MCF 10A (cell line): ENCODE measurements at regions of chr20 and their contacts with region 1.

Region 1: GRCh38 chr20:9392892-9393857 is 121.2 kb upstream of the LAMP5 start:
- DNase-seq: peak; percentile 76
- H3K4me3 Mint-ChIP-seq: no peak overlapping the region
- H3K27ac Mint-ChIP-seq: no peak overlapping the region
- H3K4me1 Mint-ChIP-seq: no peaks in the 10 kb centered on the region
- H3K27me3 Mint-ChIP-seq: no peaks in the 10 kb centered on the region
- CTCF ChIP-seq: peak; percentile 71

Region 2: GRCh38 chr20:8756410-8756809 is 636.8 kb before region 1 on chr20:
- CTCF ChIA-PET with region 1: interaction called, 52 read pairs
- POLR2A ChIA-PET with region 1: interaction called, 3 read pairs
- intact Hi-C with region 1: loop called (anchors 1 kb)
- DNase-seq: peak; percentile 76
- H3K4me3 Mint-ChIP-seq: no peak overlapping the region
- H3K27ac Mint-ChIP-seq: no peak overlapping the region
- H3K4me1 Mint-ChIP-seq: peaks cover 17% of the 10 kb centered on the region
- H3K27me3 Mint-ChIP-seq: no peaks in the 10 kb centered on the region
- CTCF ChIP-seq: no peak

Region 3: DNA sequence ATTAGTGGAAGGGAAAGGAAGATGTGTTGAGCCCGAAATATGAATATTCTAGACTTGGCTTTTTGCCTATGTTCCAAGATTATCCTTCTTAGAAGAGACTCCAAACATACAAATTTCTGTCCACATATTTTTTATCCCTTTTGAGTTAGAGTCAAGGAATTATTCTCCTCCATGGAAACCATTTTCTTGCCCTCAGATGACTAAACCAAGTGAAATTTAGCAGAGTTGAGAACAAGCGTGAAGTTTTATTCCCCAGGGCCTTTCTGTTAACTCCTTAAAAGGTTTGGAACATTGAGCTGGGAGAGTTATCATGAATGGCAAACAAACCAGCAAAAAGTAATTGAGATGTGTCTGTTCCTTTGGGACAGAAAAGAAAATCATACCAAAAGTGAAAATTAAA is 610.4 kb before region 1 on chr20:
- CTCF ChIA-PET with region 1: interaction called, 77 read pairs
- POLR2A ChIA-PET with region 1: no interaction called
- intact Hi-C with region 1: no loop called
- DNase-seq: no peak
- H3K4me3 Mint-ChIP-seq: no peak overlapping the region
- H3K27ac Mint-ChIP-seq: peak overlapping the region; percentile 51
- H3K4me1 Mint-ChIP-seq: no peaks in the 10 kb centered on the region
- H3K27me3 Mint-ChIP-seq: no peaks in the 10 kb centered on the region
- CTCF ChIP-seq: no peak

Region 4: DNA sequence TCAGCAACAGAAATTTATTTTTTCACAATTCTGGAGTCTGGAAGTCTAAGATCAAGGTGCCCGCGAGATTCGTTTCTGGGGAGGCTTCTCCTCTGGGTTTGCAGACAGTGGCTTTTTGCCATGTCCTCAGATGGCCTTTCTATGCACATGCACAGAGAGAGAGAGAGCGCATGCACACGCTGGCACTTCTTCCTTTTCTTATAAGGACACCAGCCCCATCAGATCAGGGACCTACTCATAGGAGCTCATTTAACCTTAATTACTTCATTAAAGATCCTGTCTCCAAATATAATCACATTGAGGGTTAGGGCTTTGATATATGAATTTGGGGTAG is 585.0 kb before region 1 on chr20:
- CTCF ChIA-PET with region 1: interaction called, 10 read pairs
- POLR2A ChIA-PET with region 1: no interaction called
- intact Hi-C with region 1: no loop called
- DNase-seq: no peak
- H3K4me3 Mint-ChIP-seq: no peak overlapping the region
- H3K27ac Mint-ChIP-seq: no peak overlapping the region
- H3K4me1 Mint-ChIP-seq: no peaks in the 10 kb centered on the region
- H3K27me3 Mint-ChIP-seq: no peaks in the 10 kb centered on the region
- CTCF ChIP-seq: no peak

Region 5: GRCh38 chr20:9280666-9281065 is 112.5 kb before region 1 on chr20:
- CTCF ChIA-PET with region 1: no interaction called
- POLR2A ChIA-PET with region 1: no interaction called
- intact Hi-C with region 1: no loop called
- DNase-seq: no peak
- H3K4me3 Mint-ChIP-seq: no peak overlapping the region
- H3K27ac Mint-ChIP-seq: no peak overlapping the region
- H3K4me1 Mint-ChIP-seq: peaks cover 7% of the 10 kb centered on the region
- H3K27me3 Mint-ChIP-seq: no peaks in the 10 kb centered on the region
- CTCF ChIP-seq: no peak

Region 6: DNA sequence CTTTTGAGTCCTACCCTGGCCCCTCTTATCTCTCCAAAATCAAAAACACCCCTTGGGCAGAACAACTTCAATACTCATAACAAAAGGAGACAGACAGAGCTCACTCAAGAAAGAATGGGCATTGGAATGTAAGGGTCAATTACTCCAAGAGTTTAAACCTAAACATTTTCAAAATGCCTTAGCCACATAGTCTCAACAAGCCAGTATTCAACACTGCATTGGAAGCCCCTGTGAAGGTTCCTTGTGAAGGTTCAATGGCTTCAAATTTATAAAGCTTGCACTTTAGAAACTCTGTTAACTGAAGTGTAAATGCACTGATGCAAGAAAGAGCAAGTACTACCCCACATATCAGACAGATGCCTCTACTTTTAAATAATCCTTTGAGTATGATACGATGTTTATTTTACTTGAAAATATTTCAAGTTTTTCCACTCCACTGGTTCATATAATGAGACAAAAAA is 17.9 kb before region 1 on chr20:
- CTCF ChIA-PET with region 1: interaction called, 33 read pairs
- POLR2A ChIA-PET with region 1: no interaction called
- intact Hi-C with region 1: no loop called
- DNase-seq: no peak
- H3K4me3 Mint-ChIP-seq: no peak overlapping the region
- H3K27ac Mint-ChIP-seq: no peak overlapping the region
- H3K4me1 Mint-ChIP-seq: no peaks in the 10 kb centered on the region
- H3K27me3 Mint-ChIP-seq: no peaks in the 10 kb centered on the region
- CTCF ChIP-seq: no peak

Region 7: GRCh38 chr20:9458138-9458796 is 65.1 kb after region 1 on chr20:
- CTCF ChIA-PET with region 1: no interaction called
- POLR2A ChIA-PET with region 1: no interaction called
- intact Hi-C with region 1: no loop called
- DNase-seq: peak; percentile 64
- H3K4me3 Mint-ChIP-seq: no peak overlapping the region
- H3K27ac Mint-ChIP-seq: no peak overlapping the region
- H3K4me1 Mint-ChIP-seq: no peaks in the 10 kb centered on the region
- H3K27me3 Mint-ChIP-seq: no peaks in the 10 kb centered on the region
- CTCF ChIP-seq: no peak